ENCODE measurements at regions of chr1 and their contacts with region 1.

Region 1: DNA sequence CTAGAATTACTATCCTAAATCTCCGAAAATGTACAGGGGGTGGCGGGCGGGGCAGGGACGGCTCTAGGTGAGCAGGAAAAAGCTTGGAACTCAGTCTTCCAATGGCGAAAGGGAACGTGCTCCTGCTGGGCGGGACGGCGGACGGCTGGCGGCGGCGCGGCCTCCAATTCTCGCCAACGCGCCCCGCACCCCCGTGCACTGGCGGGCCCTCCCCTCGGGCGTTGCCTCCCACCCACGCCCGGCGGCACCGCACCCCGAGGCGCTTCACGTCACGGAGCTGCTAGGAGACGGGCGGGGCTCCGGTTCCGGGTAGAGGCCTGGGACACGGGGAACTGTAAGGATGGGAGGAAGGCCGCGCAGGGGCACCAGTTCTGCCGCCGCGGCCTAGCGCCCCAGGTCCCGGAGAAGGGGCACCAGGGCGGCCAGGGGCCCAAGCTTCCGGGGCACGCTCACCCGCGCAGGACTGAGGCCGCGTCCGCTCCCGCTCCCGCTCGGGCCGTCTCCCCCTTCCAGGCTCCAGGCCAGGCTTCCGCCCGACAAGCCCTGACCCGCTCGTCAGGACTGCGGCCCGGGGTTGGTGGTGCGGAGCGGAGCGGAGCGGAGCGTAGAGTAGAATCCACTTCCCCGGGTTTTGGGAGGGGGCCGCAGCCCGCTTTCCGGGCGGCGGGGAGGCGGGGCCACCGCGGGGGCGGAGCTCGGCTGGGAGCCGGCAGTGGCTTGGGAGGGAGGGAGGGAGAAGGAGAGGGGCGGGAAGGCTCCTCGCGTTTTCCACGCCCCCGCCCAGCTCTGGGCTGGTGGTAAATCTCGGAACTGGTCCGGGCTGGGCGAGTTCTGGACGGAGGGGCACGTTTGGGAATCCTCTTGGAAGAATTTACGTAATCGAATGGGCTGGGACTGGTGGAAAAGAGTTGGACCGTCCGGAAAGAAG is at the start of gene DDX59:
- DNase-seq: peak; percentile 93
- H3K4me3 Mint-ChIP-seq: peak within 1 kb of the TSS; percentile 100
- H3K27ac Mint-ChIP-seq: peak within 1 kb of the TSS; percentile 99
- H3K4me1 Mint-ChIP-seq: peaks cover 35% of the 10 kb centered on the region
- H3K27me3 Mint-ChIP-seq: no peaks in the 10 kb centered on the region
- total RNA-seq, gene DDX59: 20.9 to 22.7 TPM

Region 2: DNA sequence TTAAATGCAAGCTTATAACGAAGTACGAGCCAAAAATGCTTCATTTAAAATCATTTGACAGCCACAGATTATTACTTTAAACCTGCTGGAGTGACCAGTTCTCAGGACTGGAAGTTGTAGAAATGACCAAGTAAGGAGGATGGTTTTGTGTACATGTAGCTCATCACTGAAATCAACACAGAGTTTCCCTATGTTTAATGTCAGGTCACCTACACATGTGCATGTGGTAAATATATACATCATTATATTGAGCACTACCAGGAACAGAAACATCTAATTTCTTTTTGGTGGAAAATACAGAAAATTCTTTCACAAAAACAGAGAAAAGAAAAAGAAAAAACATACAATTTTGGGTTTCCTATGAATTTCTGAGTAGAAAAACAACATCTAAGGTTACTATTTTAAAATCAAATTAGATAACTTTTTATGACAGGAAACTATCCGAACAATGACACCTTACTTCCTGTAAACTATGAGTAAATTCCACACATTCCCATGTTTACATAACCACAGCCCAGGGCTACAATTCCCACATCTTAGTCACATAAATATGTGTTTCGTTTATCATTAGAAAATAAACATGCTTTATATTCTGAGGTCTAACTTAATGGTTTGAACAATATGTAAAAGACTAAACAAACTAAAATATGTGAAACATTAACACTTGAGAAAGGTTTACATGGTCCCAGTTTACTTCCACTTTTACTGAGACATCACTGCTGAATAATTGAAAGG is 333.3 kb before region 1 on chr1:
- CTCF ChIA-PET with region 1: no interaction called
- intact Hi-C with region 1: no loop called
- DNase-seq: no peak
- H3K4me3 Mint-ChIP-seq: no peak overlapping the region
- H3K27ac Mint-ChIP-seq: no peak overlapping the region
- H3K4me1 Mint-ChIP-seq: peaks cover 24% of the 10 kb centered on the region
- H3K27me3 Mint-ChIP-seq: no peaks in the 10 kb centered on the region

Region 3: DNA sequence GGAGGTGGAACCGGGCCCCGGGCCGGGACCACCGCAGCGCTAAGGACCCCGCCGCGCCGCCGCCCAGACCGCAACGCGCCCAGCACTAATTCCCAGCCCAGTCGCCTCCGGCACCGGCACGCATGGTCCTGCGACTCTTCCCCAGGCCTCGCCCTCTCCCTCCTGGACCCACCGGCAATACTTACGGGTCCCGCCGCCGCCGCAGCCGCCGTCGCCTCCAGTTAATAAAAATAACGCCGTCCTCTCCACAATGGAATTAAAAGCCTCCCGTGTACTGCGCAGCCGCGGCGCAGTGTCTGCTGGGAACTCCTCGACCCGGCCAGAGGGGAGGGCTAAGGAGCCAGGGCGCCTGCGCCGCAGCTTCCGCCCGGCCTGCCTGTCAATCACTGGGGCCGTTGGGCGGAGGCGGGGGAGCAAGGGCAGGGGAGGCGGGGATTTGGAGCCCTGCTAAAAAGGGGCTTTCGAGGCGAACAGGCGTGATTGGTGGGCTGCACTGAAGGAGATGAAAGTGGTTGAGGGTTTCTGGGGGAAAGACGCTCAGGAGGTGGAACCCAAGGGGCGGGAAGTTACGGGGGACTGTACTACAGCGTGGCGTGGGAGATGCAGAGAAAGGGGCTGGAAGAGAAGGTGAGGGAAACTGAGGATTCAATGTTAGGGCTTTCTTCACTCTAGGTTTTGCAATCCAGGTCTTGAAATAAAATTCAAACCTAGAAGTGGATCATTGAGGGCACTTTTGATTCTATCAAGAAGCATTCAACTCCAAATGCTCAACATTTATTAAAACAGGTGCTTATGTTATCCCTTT is 259.6 kb before region 1 on chr1 and contains the start of gene ZNF281:
- CTCF ChIA-PET with region 1: no interaction called
- intact Hi-C with region 1: loop called (anchors 2 kb)
- DNase-seq: peak; percentile 96
- H3K4me3 Mint-ChIP-seq: peak within 1 kb of the TSS; percentile 96
- H3K27ac Mint-ChIP-seq: peak within 1 kb of the TSS; percentile 93
- H3K4me1 Mint-ChIP-seq: peaks cover 48% of the 10 kb centered on the region
- H3K27me3 Mint-ChIP-seq: no peaks in the 10 kb centered on the region
- total RNA-seq, gene ZNF281: 6.4 to 7.5 TPM

Region 4: DNA sequence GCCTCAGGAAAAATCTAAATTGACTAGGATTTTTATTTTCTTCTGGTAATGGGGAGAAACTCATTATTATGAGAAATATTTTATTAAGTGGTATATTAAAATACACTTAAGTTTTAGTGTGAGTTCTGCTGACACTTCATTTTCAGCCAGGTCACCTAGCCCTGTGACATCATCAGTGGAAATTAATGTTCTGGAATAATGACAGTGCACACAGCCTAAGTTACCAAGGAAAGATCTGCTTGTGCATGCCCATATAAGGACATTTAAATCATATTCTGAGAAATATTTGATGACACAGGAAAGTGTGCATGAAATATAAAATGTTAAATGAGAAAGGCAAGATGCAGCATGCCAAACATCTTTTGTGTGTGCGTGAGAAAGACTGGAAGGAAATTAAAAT is 151.1 kb before region 1 on chr1:
- CTCF ChIA-PET with region 1: no interaction called
- intact Hi-C with region 1: no loop called
- DNase-seq: no peak
- H3K4me3 Mint-ChIP-seq: no peak overlapping the region
- H3K27ac Mint-ChIP-seq: no peak overlapping the region
- H3K4me1 Mint-ChIP-seq: no peaks in the 10 kb centered on the region
- H3K27me3 Mint-ChIP-seq: no peaks in the 10 kb centered on the region

Region 5: GRCh38 chr1:200628223-200628881 is 41.2 kb before region 1 on chr1:
- CTCF ChIA-PET with region 1: interaction called, 47 read pairs
- intact Hi-C with region 1: loop called (anchors 1 kb)
- DNase-seq: peak; percentile 43
- H3K4me3 Mint-ChIP-seq: no peak overlapping the region
- H3K27ac Mint-ChIP-seq: no peak overlapping the region
- H3K4me1 Mint-ChIP-seq: peaks cover 32% of the 10 kb centered on the region
- H3K27me3 Mint-ChIP-seq: no peaks in the 10 kb centered on the region

Region 6: GRCh38 chr1:200738740-200739498 is 69.3 kb after region 1 on chr1 and contains the start of gene CAMSAP2:
- CTCF ChIA-PET with region 1: no interaction called
- intact Hi-C with region 1: loop called (anchors 1 kb)
- DNase-seq: peak; percentile 69
- H3K4me3 Mint-ChIP-seq: peak within 1 kb of the TSS; percentile 98
- H3K27ac Mint-ChIP-seq: peak within 1 kb of the TSS; percentile 89
- H3K4me1 Mint-ChIP-seq: peaks cover 26% of the 10 kb centered on the region
- H3K27me3 Mint-ChIP-seq: no peaks in the 10 kb centered on the region
- total RNA-seq, gene CAMSAP2: 3.9 to 6.5 TPM

Region 7: GRCh38 chr1:200802865-200803512 is 133.4 kb after region 1 on chr1:
- CTCF ChIA-PET with region 1: interaction called, 12 read pairs
- intact Hi-C with region 1: loop called (anchors 1 kb)
- DNase-seq: peak; percentile 90
- H3K4me3 Mint-ChIP-seq: no peak overlapping the region
- H3K27ac Mint-ChIP-seq: no peak overlapping the region
- H3K4me1 Mint-ChIP-seq: peaks cover 4% of the 10 kb centered on the region
- H3K27me3 Mint-ChIP-seq: no peaks in the 10 kb centered on the region

Region 8: GRCh38 chr1:200992382-200993048 is 322.9 kb after region 1 on chr1:
- CTCF ChIA-PET with region 1: no interaction called
- intact Hi-C with region 1: no loop called
- DNase-seq: no peak
- H3K4me3 Mint-ChIP-seq: no peak overlapping the region
- H3K27ac Mint-ChIP-seq: no peak overlapping the region
- H3K4me1 Mint-ChIP-seq: no peaks in the 10 kb centered on the region
- H3K27me3 Mint-ChIP-seq: no peaks in the 10 kb centered on the region

Region 9: DNA sequence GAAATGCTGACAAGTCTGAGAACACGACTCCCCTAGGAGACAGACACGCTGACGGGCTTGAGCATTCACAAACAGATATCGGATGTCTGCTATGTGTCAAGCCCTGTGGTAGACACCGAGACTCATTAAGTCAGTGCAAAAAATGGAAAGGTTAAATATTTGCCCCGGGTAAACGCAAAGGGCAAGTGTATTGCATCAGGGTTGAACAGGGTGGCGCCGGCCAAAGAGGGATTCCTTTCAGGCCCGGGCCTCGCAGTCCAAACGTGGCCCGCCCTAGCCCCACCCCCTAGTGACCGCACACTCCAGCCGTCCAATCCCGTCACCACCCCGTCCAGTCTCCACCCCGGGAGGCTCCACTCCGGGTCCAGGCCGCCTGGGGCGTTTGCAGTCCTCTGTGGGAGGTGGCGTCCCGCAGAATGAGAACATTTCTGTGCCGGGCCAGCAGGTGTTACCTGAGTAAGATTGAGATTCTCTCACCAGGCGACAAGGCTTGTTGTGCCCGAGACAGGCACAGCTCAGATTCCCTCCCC is 501.0 kb after region 1 on chr1:
- CTCF ChIA-PET with region 1: no interaction called
- intact Hi-C with region 1: loop called (anchors 1 kb)
- DNase-seq: peak; percentile 93
- H3K4me3 Mint-ChIP-seq: peak overlapping the region; percentile 76
- H3K27ac Mint-ChIP-seq: peak overlapping the region; percentile 85
- H3K4me1 Mint-ChIP-seq: peaks cover 21% of the 10 kb centered on the region
- H3K27me3 Mint-ChIP-seq: peaks cover 2% of the 10 kb centered on the region

Region 10: GRCh38 chr1:201506556-201507359 is 837.2 kb after region 1 on chr1 and contains the start of gene CSRP1:
- CTCF ChIA-PET with region 1: no interaction called
- intact Hi-C with region 1: loop called (anchors 10 kb)
- DNase-seq: peak; percentile 89
- H3K4me3 Mint-ChIP-seq: peak within 1 kb of the TSS; percentile 83
- H3K27ac Mint-ChIP-seq: peak within 1 kb of the TSS; percentile 82
- H3K4me1 Mint-ChIP-seq: peaks cover 42% of the 10 kb centered on the region
- H3K27me3 Mint-ChIP-seq: no peaks in the 10 kb centered on the region
- total RNA-seq, gene CSRP1: 35.7 to 36.6 TPM